ENCODE measurements at regions of chr12 and their contacts with region 1.

Region 1: GRCh38 chr12:4604684-4605193 is 42.7 kb downstream of the DYRK4 start:
- DNase-seq: peak; percentile 84
- H3K4me3 Mint-ChIP-seq: peak overlapping the region; percentile 91
- H3K27ac Mint-ChIP-seq: peak overlapping the region; percentile 68
- H3K4me1 Mint-ChIP-seq: peaks cover 12% of the 10 kb centered on the region
- H3K27me3 Mint-ChIP-seq: peaks cover 20% of the 10 kb centered on the region

Region 2: GRCh38 chr12:4287325-4288211 is 317.2 kb before region 1 on chr12:
- CTCF ChIA-PET with region 1: no interaction called
- POLR2A ChIA-PET with region 1: no interaction called
- DNase-seq: no peak
- H3K4me3 Mint-ChIP-seq: no peak overlapping the region
- H3K27ac Mint-ChIP-seq: peak overlapping the region; percentile 56
- H3K4me1 Mint-ChIP-seq: peaks cover 96% of the 10 kb centered on the region
- H3K27me3 Mint-ChIP-seq: no peaks in the 10 kb centered on the region

Region 3: DNA sequence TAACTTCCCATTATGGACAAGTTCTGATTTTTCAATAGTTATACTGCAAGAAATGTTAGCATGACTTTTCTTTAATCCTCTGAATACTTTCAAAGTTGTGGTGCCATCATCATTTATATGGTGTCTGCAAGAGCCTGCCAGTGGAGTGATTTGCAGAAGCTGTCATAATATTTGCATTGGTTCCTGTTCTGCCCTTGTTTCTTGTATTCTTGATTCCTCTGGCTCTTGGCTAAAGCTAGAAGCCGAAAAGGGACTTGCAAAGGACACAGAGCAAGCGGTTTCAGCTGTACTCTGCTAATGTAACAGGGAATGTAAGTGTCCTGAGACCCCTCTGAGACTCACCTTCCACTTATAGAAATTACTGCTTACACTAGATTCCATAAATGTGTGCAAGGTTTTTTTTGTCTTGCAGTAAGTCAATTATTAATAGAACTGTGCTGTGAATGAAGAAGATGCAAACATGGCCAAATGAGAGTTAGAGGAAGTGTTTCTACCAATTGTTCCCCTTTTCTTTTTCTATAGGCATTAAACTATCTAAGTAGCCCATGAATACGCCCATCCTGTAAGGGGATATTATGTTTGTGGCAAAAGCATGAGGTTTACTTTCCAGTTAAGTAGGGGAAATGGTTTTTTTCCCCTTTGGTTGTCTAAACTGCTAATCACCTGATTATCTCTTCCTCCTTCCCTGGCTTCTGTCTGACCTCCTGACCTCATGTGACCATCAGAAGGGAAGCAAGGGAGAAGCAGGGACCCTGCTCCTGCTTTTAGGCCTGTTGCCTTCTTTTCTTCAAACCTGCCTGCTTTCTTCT is 37.5 kb before region 1 on chr12:
- CTCF ChIA-PET with region 1: no interaction called
- POLR2A ChIA-PET with region 1: no interaction called
- DNase-seq: no peak
- H3K4me3 Mint-ChIP-seq: no peak overlapping the region
- H3K27ac Mint-ChIP-seq: no peak overlapping the region
- H3K4me1 Mint-ChIP-seq: peaks cover 1% of the 10 kb centered on the region
- H3K27me3 Mint-ChIP-seq: no peaks in the 10 kb centered on the region

Region 4: DNA sequence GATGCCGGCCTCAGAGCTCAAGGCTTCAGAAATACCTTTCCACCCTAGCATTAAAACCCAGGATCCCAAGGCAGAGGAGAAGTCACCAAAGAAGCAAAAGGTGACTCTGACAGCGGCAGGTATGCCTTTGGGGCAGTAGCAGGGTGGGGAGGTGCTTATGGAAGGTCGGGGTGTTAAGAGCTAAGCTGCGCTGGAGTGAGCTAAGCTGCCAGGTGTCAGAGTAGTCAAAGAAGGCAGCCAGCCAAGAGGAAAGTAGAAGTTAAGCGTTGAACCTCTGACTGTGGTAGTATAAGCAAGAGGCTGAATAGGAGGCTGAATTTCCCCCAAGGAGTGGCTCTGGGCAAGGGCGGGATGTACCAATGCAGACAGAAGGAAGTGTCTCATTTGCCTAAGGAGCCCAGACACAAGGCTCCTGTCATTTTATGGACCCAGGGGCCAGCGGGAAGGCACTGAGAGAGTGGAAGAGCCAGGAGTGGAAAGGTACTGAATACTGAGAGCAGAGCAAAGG is 13.5 kb before region 1 on chr12:
- CTCF ChIA-PET with region 1: interaction called, 15 read pairs
- POLR2A ChIA-PET with region 1: no interaction called
- DNase-seq: no peak
- H3K4me3 Mint-ChIP-seq: no peak overlapping the region
- H3K27ac Mint-ChIP-seq: no peak overlapping the region
- H3K4me1 Mint-ChIP-seq: no peaks in the 10 kb centered on the region
- H3K27me3 Mint-ChIP-seq: peaks cover 7% of the 10 kb centered on the region